Activated B cell treated with CpG ODN at 0.5 μM for 24 hours (primary cell): ENCODE measurements at regions of chr5 and their contacts with region 1.

Region 1: DNA sequence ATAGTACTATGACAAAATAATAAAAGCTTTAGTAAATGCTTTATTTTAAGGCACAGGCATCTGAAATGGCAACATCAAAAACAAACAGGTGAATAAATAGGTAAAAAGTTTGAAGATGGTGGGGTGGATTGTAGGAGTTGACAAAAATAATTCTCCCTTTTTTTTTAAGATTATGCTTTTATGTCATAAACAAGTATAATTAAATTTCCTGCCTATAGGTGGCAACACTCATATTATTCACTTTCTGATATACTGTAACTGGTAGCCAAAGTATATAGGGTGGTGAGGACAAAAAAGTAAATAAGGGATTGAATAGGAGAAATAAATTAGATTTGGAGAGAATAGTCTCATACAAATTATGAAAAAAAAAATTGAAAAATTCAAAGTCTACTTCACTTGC is 120.0 kb upstream of the ACOT12 start:
- DNase-seq: no peak
- ATAC-seq: peak; percentile 49
- H3K4me3 Mint-ChIP-seq: no peak overlapping the region
- H3K27ac Mint-ChIP-seq: no peak overlapping the region
- H3K4me1 Mint-ChIP-seq: no peaks in the 10 kb centered on the region
- H3K27me3 Mint-ChIP-seq: no peaks in the 10 kb centered on the region
- CTCF ChIP-seq: no peak

Region 2: GRCh38 chr5:81552852-81553566 is 39.0 kb after region 1 on chr5:
- CTCF ChIA-PET with region 1: no interaction called
- POLR2A ChIA-PET with region 1: no interaction called
- intact Hi-C with region 1: no loop called
- DNase-seq: no peak
- ATAC-seq: no peak
- H3K4me3 Mint-ChIP-seq: no peak overlapping the region
- H3K27ac Mint-ChIP-seq: no peak overlapping the region
- H3K4me1 Mint-ChIP-seq: peaks cover 6% of the 10 kb centered on the region
- H3K27me3 Mint-ChIP-seq: no peaks in the 10 kb centered on the region
- CTCF ChIP-seq: no peak

Region 3: GRCh38 chr5:81838307-81838906 is 324.4 kb after region 1 on chr5:
- CTCF ChIA-PET with region 1: interaction called, 16 read pairs
- POLR2A ChIA-PET with region 1: no interaction called
- intact Hi-C with region 1: loop called (anchors 1 kb)
- DNase-seq: no peak
- ATAC-seq: peak; percentile 73
- H3K4me3 Mint-ChIP-seq: no peak overlapping the region
- H3K27ac Mint-ChIP-seq: no peak overlapping the region
- H3K4me1 Mint-ChIP-seq: peaks cover 2% of the 10 kb centered on the region
- H3K27me3 Mint-ChIP-seq: no peaks in the 10 kb centered on the region
- CTCF ChIP-seq: no peak

Region 4: GRCh38 chr5:82046276-82046647 is 532.3 kb after region 1 on chr5:
- CTCF ChIA-PET with region 1: no interaction called
- POLR2A ChIA-PET with region 1: no interaction called
- intact Hi-C with region 1: no loop called
- DNase-seq: no peak
- ATAC-seq: no peak
- H3K4me3 Mint-ChIP-seq: no peak overlapping the region
- H3K27ac Mint-ChIP-seq: no peak overlapping the region
- H3K4me1 Mint-ChIP-seq: no peaks in the 10 kb centered on the region
- H3K27me3 Mint-ChIP-seq: no peaks in the 10 kb centered on the region
- CTCF ChIP-seq: no peak